Head of caudate nucleus (tissue), 42 donors: ENCODE measurements at regions of chr5 and their contacts with region 1.

Region 1: DNA sequence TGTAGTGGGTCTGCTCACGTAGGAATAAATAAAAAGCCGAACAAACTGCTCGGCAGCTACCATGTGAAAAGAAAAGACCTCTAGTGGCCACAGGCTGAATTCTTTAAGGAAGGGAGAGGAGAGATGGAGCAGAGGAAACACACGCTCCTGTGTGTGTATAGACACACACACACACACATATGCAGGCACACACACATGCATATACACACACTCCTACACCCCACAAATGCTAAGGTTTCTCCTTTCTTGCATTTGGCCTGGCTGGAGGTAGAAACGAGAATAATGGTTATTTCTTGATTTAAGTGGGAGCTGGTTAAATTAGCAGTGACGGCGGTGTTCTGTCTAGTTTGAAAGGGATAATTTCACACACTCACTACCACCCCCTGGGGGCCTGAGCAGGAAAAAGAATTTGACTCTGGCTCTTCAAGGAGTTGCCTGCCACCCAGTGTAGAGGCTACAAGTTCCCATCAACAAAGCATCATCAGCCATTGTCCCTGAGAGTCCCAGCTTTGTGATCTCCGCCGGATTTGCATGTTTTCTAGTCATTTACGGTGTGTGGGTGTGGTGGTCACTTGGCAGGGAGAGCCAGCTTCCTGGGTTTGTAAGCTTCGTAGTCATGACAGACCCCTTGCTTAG is at the start of gene INSYN2B:
- DNase-seq: peak; percentile 58 to 97 (median 88)

Region 2: GRCh38 chr5:169701910-169702451 is 278.6 kb before region 1 on chr5:
- intact Hi-C with region 1: loop called (anchors 5 kb)
- DNase-seq: peak in 1 of 42 donors; percentile 34